HEK293T (cell line): ENCODE measurements at regions of chr1 and their contacts with region 1.

Region 1: DNA sequence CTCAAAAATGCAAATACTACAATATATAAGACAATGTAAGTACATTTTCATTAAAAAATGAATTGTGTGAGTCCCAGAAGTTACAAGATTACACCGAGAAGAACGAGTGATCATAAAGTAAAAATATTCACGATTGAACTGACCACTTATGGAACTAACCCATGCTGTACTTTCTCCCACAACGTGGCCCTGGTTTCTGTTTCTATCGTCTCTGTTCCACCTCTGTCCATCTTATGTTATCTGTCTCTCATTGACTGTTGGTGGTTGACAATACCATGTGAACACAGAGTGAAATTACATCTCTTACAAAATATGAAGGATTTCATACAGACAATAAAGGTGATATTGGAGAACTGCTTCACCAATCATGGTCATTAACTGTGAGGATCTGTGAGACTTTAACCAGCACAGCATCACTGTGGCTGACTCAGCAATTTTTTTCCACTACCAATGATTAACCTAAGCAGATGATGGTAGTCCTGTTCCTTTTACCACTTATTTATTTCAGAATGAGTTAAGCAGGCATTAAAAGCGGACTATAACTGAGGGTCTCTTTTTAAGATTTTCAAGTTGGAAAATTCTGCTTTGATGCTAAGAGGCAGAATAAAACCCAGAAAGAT is 165.1 kb downstream of the TGFB2 start:
- DNase-seq: no peak

Region 2: DNA sequence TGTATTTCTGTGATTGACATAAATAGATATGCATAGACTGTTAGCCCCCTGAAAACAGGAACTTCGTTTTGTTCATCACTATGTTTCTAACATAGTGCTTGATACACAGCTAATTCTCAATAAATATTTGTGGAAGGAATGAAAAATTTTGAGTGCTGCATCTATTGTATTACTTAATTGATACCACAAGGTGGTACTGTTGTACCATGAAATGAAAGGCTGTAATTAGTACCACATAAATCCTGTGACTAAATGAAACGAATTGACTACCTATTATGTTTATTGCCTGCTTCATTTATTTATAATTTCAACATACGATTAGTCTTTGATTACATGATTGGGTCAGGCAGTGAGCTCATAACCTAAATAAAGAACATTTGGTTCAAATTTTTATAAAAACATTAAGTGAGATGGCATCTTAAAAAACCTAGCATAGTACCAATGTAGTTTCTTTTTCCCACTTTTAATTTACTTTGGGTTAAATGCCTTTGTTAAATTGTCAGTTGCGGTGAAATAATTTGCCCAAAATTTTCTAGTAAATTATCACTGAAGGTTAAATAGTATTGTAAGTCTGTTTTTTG is 180.1 kb before region 1 on chr1:
- CTCF ChIA-PET with region 1: interaction called, 10 read pairs
- POLR2A ChIA-PET with region 1: no interaction called
- DNase-seq: peak; percentile 14

Region 3: DNA sequence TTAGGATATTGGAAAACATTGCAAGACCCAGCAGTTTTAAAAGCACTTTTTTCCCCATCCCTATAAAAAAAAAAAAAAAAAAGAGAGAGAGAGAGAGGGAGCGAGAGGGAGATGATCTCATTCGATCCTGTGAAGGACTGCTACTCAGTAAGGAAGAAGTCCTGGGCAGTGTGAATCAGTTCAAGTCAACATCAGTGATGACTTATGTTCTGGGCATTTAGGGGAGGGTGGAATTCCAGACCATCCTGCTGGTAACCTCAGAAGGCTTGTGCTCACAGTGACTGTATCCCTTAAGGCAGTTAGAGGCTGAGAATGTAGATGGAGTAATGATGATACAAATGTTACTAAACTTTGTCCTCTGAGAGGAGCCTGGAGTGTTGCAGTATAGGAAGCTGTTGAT is 13.7 kb before region 1 on chr1:
- CTCF ChIA-PET with region 1: no interaction called
- POLR2A ChIA-PET with region 1: no interaction called
- DNase-seq: no peak